H1 (cell line): ENCODE measurements at regions of chr9 and their contacts with region 1.

Region 1: GRCh38 chr9:36407122-36407723 is 7.2 kb upstream of the RNF38 start:
- DNase-seq: peak in 1 of 2 experiments; percentile 54
- H3K4me3 ChIP-seq: no peak overlapping the region
- H3K27ac ChIP-seq: no peak overlapping the region; the same call in 1 of the 2 replicates
- H3K4me1 ChIP-seq: peaks cover 0 to 5% (median 3%) of the 10 kb centered on the region in 4 experiments; a peak in 2 of 7 replicates
- H3K27me3 ChIP-seq: no peaks in the 10 kb centered on the region
- CTCF ChIP-seq: peak; percentile 34 to 86 (median 84)
- EP300 ChIP-seq: no peak
- POLR2A ChIP-seq: no peak
- RAD21 ChIP-seq: peak; percentile 90 to 95

Region 2: GRCh38 chr9:36092509-36093215 is 314.6 kb before region 1 on chr9:
- CTCF ChIA-PET with region 1: no interaction called
- POLR2A ChIA-PET with region 1: no interaction called
- DNase-seq: no peak
- H3K4me3 ChIP-seq: no peak overlapping the region
- H3K27ac ChIP-seq: peak overlapping the region; percentile 41
- H3K4me1 ChIP-seq: peaks cover 0 to 6% (median 4%) of the 10 kb centered on the region in 4 experiments; a peak in 4 of 7 replicates
- H3K27me3 ChIP-seq: no peaks in the 10 kb centered on the region
- CTCF ChIP-seq: no peak
- EP300 ChIP-seq: no peak
- POLR2A ChIP-seq: no peak
- RAD21 ChIP-seq: no peak

Region 3: DNA sequence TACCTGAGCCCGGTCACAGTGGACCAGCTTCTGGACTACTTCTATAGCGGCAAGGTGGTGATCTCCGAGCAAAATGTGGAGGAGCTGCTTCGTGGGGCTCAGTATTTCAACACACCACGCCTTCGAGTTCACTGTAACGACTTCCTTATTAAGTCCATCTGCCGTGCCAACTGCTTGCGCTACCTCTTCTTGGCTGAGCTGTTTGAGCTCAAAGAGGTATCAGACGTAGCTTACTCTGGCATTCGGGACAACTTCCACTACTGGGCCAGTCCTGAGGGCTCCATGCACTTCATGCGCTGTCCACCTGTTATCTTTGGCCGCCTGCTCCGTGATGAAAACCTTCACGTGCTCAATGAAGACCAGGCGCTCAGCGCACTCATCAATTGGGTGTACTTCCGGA is 237.5 kb before region 1 on chr9:
- CTCF ChIA-PET with region 1: no interaction called
- POLR2A ChIA-PET with region 1: no interaction called
- DNase-seq: no peak
- H3K4me3 ChIP-seq: no peak overlapping the region
- H3K27ac ChIP-seq: no peak overlapping the region
- H3K4me1 ChIP-seq: peaks cover 0 to 4% (median 2%) of the 10 kb centered on the region in 4 experiments; a peak in 4 of 7 replicates
- H3K27me3 ChIP-seq: no peaks in the 10 kb centered on the region
- CTCF ChIP-seq: no peak
- EP300 ChIP-seq: no peak
- POLR2A ChIP-seq: no peak
- RAD21 ChIP-seq: no peak

Region 4: DNA sequence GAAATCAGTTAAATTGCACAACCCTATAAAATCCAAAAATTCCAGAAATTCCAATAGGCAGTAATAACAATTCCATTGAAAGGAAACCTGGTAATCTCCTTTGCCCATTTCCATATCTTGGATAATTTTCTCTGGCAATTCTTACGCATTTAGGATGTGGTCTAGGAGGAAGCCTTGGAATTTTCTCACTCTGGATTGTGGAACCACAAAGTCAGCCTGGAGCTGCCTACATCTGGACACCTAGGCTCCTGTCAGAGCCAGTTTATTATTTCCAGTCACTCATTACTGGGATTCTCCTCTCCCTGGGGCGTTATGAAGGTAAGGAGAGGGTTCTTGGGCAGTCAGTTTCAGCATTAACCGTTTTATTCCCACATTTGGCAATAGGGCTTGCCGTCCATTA is 108.6 kb before region 1 on chr9:
- CTCF ChIA-PET with region 1: no interaction called
- POLR2A ChIA-PET with region 1: no interaction called
- DNase-seq: no peak
- H3K4me3 ChIP-seq: no peak overlapping the region
- H3K27ac ChIP-seq: no peak overlapping the region
- H3K4me1 ChIP-seq: no peaks in the 10 kb centered on the region
- H3K27me3 ChIP-seq: no peaks in the 10 kb centered on the region
- CTCF ChIP-seq: no peak
- EP300 ChIP-seq: no peak
- POLR2A ChIP-seq: no peak
- RAD21 ChIP-seq: no peak

Region 5: GRCh38 chr9:36358486-36358885 is 48.7 kb before region 1 on chr9:
- CTCF ChIA-PET with region 1: no interaction called
- POLR2A ChIA-PET with region 1: no interaction called
- DNase-seq: no peak
- H3K4me3 ChIP-seq: no peak overlapping the region
- H3K27ac ChIP-seq: no peak overlapping the region
- H3K4me1 ChIP-seq: no peaks in the 10 kb centered on the region
- H3K27me3 ChIP-seq: no peaks in the 10 kb centered on the region
- CTCF ChIP-seq: no peak
- EP300 ChIP-seq: no peak
- POLR2A ChIP-seq: no peak
- RAD21 ChIP-seq: no peak

Region 6: GRCh38 chr9:36423206-36423605 is 16.0 kb after region 1 on chr9:
- CTCF ChIA-PET with region 1: interaction called, 68 read pairs
- POLR2A ChIA-PET with region 1: interaction called, 3 read pairs
- DNase-seq: no peak
- H3K4me3 ChIP-seq: no peak overlapping the region
- H3K27ac ChIP-seq: no peak overlapping the region
- H3K4me1 ChIP-seq: no peaks in the 10 kb centered on the region
- H3K27me3 ChIP-seq: no peaks in the 10 kb centered on the region
- CTCF ChIP-seq: no peak
- EP300 ChIP-seq: no peak
- POLR2A ChIP-seq: no peak
- RAD21 ChIP-seq: no peak

Region 7: GRCh38 chr9:36436909-36437308 is 29.7 kb after region 1 on chr9:
- CTCF ChIA-PET with region 1: interaction called, 52 read pairs
- POLR2A ChIA-PET with region 1: interaction called, 4 read pairs
- DNase-seq: no peak
- H3K4me3 ChIP-seq: no peak overlapping the region
- H3K27ac ChIP-seq: no peak overlapping the region
- H3K4me1 ChIP-seq: peaks cover 1 to 6% (median 4%) of the 10 kb centered on the region in 4 experiments; a peak in 3 of 7 replicates
- H3K27me3 ChIP-seq: no peaks in the 10 kb centered on the region
- CTCF ChIP-seq: no peak
- EP300 ChIP-seq: no peak
- POLR2A ChIP-seq: no peak
- RAD21 ChIP-seq: no peak

Region 8: DNA sequence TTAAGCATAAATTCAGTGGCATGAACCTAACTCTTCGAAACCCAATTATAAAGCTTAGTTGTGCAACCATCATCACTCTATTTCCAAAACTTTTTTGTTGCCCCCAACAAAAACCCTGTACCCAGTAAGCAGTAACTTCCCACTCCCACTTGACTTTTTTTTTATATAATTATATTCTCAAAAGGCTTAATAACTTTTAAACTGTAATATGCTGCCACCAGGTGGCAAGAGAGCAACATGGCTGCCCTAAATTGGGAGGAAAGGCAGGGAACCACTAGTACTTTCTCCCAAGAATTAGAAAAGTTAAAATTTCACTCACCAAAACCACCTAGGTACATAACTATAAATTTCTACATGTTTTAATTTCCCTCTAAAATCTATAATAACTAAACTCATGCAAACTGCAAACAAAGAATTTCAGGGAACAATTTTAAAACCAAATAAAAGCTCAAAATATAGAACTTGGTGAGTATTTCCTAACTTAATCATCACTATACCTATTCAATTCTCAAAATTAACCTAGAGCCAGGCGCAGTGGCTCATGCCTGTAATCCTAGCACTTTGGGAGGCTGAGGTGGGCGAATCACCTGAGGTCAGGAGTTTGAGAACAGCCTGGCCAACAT is 43.0 kb after region 1 on chr9:
- CTCF ChIA-PET with region 1: interaction called, 144 read pairs
- POLR2A ChIA-PET with region 1: interaction called, 5 read pairs
- DNase-seq: no peak
- H3K4me3 ChIP-seq: no peak overlapping the region
- H3K27ac ChIP-seq: no peak overlapping the region
- H3K4me1 ChIP-seq: peaks cover 0 to 8% (median 4%) of the 10 kb centered on the region in 4 experiments; a peak in 6 of 7 replicates
- H3K27me3 ChIP-seq: no peaks in the 10 kb centered on the region
- CTCF ChIP-seq: peak in 2 of 3 experiments; percentile 42 to 61; a peak in 3 of 4 replicates
- EP300 ChIP-seq: no peak
- POLR2A ChIP-seq: no peak
- RAD21 ChIP-seq: peak; percentile 62 to 72

Region 9: GRCh38 chr9:36530224-36530623 is 123.0 kb after region 1 on chr9:
- CTCF ChIA-PET with region 1: interaction called, 15 read pairs
- POLR2A ChIA-PET with region 1: no interaction called
- DNase-seq: no peak
- H3K4me3 ChIP-seq: no peak overlapping the region
- H3K27ac ChIP-seq: no peak overlapping the region
- H3K4me1 ChIP-seq: no peaks in the 10 kb centered on the region
- H3K27me3 ChIP-seq: no peaks in the 10 kb centered on the region
- CTCF ChIP-seq: no peak
- EP300 ChIP-seq: no peak
- POLR2A ChIP-seq: no peak
- RAD21 ChIP-seq: no peak

Region 10: DNA sequence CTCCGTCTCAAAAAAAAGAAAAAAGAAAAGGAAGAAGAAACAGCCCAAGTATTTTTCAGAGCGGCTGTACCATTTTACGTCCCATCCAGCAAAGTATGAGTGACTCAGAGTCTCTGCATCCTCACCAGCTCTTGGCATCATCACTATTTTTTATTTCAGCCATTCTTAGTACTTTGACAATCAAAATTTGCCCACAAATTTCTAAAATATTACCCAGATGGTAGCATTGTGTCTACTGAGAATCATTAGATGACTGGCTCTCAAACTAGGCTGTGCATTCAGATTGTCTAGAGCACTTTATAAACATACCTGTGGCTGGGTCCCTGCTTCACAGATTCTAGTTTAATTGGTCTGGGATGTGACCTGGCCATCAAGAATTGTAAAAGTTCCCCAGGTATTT is 143.9 kb after region 1 on chr9:
- CTCF ChIA-PET with region 1: interaction called, 120 read pairs
- POLR2A ChIA-PET with region 1: interaction called, 3 read pairs
- DNase-seq: no peak
- H3K4me3 ChIP-seq: no peak overlapping the region
- H3K27ac ChIP-seq: no peak overlapping the region
- H3K4me1 ChIP-seq: no peaks in the 10 kb centered on the region; a peak in 1 of 7 replicates
- H3K27me3 ChIP-seq: no peaks in the 10 kb centered on the region
- CTCF ChIP-seq: no peak
- EP300 ChIP-seq: no peak
- POLR2A ChIP-seq: no peak
- RAD21 ChIP-seq: no peak

Region 11: GRCh38 chr9:36572515-36573418 is 165.5 kb after region 1 on chr9 and contains the start of gene MELK:
- CTCF ChIA-PET with region 1: interaction called, 19 read pairs
- POLR2A ChIA-PET with region 1: no interaction called
- DNase-seq: peak in 1 of 2 experiments; percentile 95
- H3K4me3 ChIP-seq: peak within 1 kb of the TSS; percentile 72 to 93 (median 84)
- H3K27ac ChIP-seq: peak within 1 kb of the TSS; percentile 34
- H3K4me1 ChIP-seq: peaks cover 0 to 2% (median 0%) of the 10 kb centered on the region in 4 experiments; a peak in 4 of 7 replicates
- H3K27me3 ChIP-seq: no peaks in the 10 kb centered on the region
- CTCF ChIP-seq: no peak
- EP300 ChIP-seq: no peak
- POLR2A ChIP-seq: peak; percentile 47 to 92
- RAD21 ChIP-seq: no peak
- total RNA-seq, gene MELK: 53.1 and 53.6 TPM in 2 replicates